B cell (primary cell): ENCODE measurements at regions of chr4 and their contacts with region 1.

Region 1: DNA sequence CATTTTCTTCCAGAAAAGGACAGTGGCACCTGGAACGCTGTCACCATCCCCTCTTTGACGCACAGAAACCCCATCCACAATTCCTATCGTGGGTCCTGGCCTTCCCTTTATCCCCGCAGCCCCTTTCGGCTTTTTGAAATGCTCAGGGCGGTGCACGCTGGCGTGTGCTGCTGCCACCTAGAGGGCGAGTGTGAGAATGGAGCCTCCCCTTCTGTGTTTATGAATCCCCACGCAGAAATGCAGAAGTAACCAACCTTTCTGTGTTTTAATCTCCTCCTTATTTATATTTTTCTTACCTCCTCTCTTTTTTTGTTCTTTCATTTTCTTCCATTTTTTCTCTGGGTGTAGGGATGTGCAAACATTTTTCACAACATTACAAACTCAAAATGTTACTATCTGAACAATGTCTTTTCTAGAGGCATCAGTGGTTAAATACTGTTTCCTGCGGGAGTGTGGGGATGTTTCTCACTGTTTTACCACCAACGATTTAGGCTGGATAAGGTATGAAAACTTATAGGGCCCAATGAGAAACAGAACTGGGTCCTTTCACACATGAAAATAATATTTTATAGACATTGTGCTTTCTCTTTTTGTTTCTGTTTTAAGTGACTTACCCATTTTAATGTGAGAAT is 50.0 kb downstream of the TMA16 start:
- DNase-seq: peak; percentile 84
- ATAC-seq: peak; percentile 88
- H3K4me3 ChIP-seq: no peak overlapping the region
- H3K4me3 Mint-ChIP-seq: no peak overlapping the region
- H3K27ac ChIP-seq: peak overlapping the region; percentile 17 to 58
- H3K27ac Mint-ChIP-seq: no peak overlapping the region
- H3K4me1 ChIP-seq: peaks cover 27 to 28% of the 10 kb centered on the region in 2 donors
- H3K4me1 Mint-ChIP-seq: peaks cover 23% of the 10 kb centered on the region
- H3K27me3 ChIP-seq: no peaks in the 10 kb centered on the region
- H3K27me3 Mint-ChIP-seq: no peaks in the 10 kb centered on the region
- CTCF ChIP-seq: peak; percentile 95

Region 2: GRCh38 chr4:163048447-163048846 is 496.1 kb before region 1 on chr4:
- CTCF ChIA-PET with region 1: no interaction called
- POLR2A ChIA-PET with region 1: no interaction called
- intact Hi-C with region 1: loop called (anchors 10 kb)
- DNase-seq: peak; percentile 27
- ATAC-seq: peak; percentile 17
- H3K4me3 ChIP-seq: no peak overlapping the region
- H3K4me3 Mint-ChIP-seq: no peak overlapping the region
- H3K27ac ChIP-seq: no peak overlapping the region
- H3K27ac Mint-ChIP-seq: no peak overlapping the region
- H3K4me1 ChIP-seq: no peaks in the 10 kb centered on the region
- H3K4me1 Mint-ChIP-seq: no peaks in the 10 kb centered on the region
- H3K27me3 ChIP-seq: no peaks in the 10 kb centered on the region
- H3K27me3 Mint-ChIP-seq: peaks cover 13% of the 10 kb centered on the region
- CTCF ChIP-seq: peak; percentile 66

Region 3: DNA sequence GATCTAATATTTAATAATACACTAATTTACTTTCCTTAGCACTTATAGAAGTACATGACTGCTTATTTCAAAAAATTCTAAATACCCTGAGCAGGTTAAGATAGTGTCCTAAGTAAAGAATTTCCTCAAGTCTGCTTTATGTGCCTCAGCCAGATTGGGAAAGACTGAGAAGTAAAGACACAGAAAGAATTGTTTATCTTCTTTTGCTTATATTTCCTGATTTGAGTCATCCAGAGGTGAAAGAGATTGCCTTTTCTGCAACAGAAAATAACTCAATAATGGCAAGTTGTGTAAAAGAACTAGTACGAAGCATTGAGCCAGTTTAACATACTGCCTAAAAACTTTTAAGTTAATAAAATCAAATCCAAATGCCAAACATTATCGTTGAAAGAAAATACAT is 422.8 kb before region 1 on chr4:
- CTCF ChIA-PET with region 1: no interaction called
- POLR2A ChIA-PET with region 1: no interaction called
- intact Hi-C with region 1: no loop called
- DNase-seq: no peak
- ATAC-seq: no peak
- H3K4me3 ChIP-seq: no peak overlapping the region
- H3K4me3 Mint-ChIP-seq: no peak overlapping the region
- H3K27ac ChIP-seq: no peak overlapping the region
- H3K27ac Mint-ChIP-seq: no peak overlapping the region
- H3K4me1 ChIP-seq: no peaks in the 10 kb centered on the region
- H3K4me1 Mint-ChIP-seq: no peaks in the 10 kb centered on the region
- H3K27me3 ChIP-seq: no peaks in the 10 kb centered on the region
- H3K27me3 Mint-ChIP-seq: no peaks in the 10 kb centered on the region
- CTCF ChIP-seq: no peak

Region 4: GRCh38 chr4:163476761-163477438 is 67.6 kb before region 1 on chr4:
- CTCF ChIA-PET with region 1: interaction called, 25 read pairs
- POLR2A ChIA-PET with region 1: no interaction called
- intact Hi-C with region 1: no loop called
- DNase-seq: no peak
- ATAC-seq: no peak
- H3K4me3 ChIP-seq: no peak overlapping the region
- H3K4me3 Mint-ChIP-seq: no peak overlapping the region
- H3K27ac ChIP-seq: no peak overlapping the region
- H3K27ac Mint-ChIP-seq: no peak overlapping the region
- H3K4me1 ChIP-seq: peaks cover under 1 to 9% of the 10 kb centered on the region in 2 donors
- H3K4me1 Mint-ChIP-seq: peaks cover 5% of the 10 kb centered on the region
- H3K27me3 ChIP-seq: peaks cover 0 to 4% (median 0%) of the 10 kb centered on the region in 4 experiments
- H3K27me3 Mint-ChIP-seq: no peaks in the 10 kb centered on the region
- CTCF ChIP-seq: no peak

Region 5: GRCh38 chr4:163494360-163495162 is 50.0 kb before region 1 on chr4 and contains the start of gene TMA16:
- CTCF ChIA-PET with region 1: interaction called, 34 read pairs
- POLR2A ChIA-PET with region 1: interaction called, 8 read pairs
- intact Hi-C with region 1: loop called (anchors 2 kb)
- DNase-seq: peak; percentile 90
- ATAC-seq: peak; percentile 67
- H3K4me3 ChIP-seq: peak within 1 kb of the TSS; percentile 68 to 99 (median 96)
- H3K4me3 Mint-ChIP-seq: peak within 1 kb of the TSS; percentile 99
- H3K27ac ChIP-seq: peak within 1 kb of the TSS; percentile 80 to 81
- H3K27ac Mint-ChIP-seq: peak within 1 kb of the TSS; percentile 100
- H3K4me1 ChIP-seq: peaks cover 21 to 28% of the 10 kb centered on the region in 2 donors
- H3K4me1 Mint-ChIP-seq: peaks cover 42% of the 10 kb centered on the region
- H3K27me3 ChIP-seq: no peaks in the 10 kb centered on the region
- H3K27me3 Mint-ChIP-seq: no peaks in the 10 kb centered on the region
- CTCF ChIP-seq: no peak
- total RNA-seq, gene TMA16: 40.5 and 49.0 TPM in 2 replicates

Region 6: DNA sequence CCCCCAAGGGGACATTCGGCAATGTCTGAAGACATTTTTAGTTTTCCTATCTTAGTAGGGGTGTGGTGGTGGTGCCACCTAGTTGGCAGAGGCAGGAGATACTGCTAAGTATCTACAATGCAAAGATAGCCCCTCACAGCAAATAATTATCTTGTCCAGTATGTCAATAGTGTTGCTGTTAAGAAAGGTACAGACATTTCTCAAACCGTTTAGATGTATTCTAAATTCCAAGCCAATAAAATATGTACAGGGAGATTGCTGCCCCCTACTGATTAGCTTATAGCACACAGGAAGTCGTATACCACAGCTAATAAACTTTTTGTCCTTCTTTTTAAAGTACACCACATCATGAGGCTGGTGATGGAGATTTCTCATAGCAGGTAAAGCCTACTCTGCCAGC is 210.5 kb after region 1 on chr4:
- CTCF ChIA-PET with region 1: interaction called, 225 read pairs
- POLR2A ChIA-PET with region 1: interaction called, 4 read pairs
- intact Hi-C with region 1: no loop called
- DNase-seq: peak; percentile 56
- ATAC-seq: peak; percentile 54
- H3K4me3 ChIP-seq: peak overlapping the region in 1 of 5 experiments; percentile 8
- H3K4me3 Mint-ChIP-seq: peak overlapping the region; percentile 64
- H3K27ac ChIP-seq: no peak overlapping the region
- H3K27ac Mint-ChIP-seq: no peak overlapping the region
- H3K4me1 ChIP-seq: peaks cover 5 to 6% of the 10 kb centered on the region in 2 donors
- H3K4me1 Mint-ChIP-seq: peaks cover 5% of the 10 kb centered on the region
- H3K27me3 ChIP-seq: no peaks in the 10 kb centered on the region
- H3K27me3 Mint-ChIP-seq: no peaks in the 10 kb centered on the region
- CTCF ChIP-seq: peak; percentile 74